ENCODE measurements at regions of chr12 and their contacts with region 1.

Region 1: DNA sequence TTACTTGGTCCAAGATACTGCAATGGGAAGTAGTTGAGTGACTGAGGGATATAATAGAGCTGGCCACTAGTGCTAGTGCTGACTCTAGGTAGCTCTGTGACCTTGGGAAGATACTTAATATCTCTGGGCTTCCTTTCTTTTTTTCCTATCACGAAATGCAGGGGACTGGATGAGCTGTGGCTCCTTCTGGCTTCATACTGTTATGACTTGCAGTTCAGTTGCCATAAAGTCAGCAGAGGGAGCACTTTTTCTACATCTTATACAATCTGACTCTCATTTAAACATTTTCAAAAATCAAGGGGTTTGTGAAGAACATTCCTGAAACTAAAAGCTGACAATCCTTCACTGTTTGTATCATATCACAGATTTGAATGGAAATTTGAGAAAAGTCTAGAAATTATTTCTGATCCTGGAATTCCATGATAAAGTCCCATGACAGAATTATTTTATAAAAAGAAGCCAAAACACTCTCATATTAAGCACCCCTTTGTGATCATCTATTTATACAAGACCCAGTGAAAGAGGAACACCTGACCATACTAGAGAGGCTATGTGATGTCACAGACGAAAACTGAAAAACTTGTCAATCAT is 5.4 kb downstream of the BHLHE41 start:
- DNase-seq: peak; percentile 50 to 79
- ATAC-seq: peak; percentile 11 to 55; a peak in 4 of 6 replicates
- H3K4me3 ChIP-seq: no peak overlapping the region
- H3K27ac ChIP-seq: no peak overlapping the region
- H3K4me1 ChIP-seq: peaks cover 19% of the 10 kb centered on the region
- CTCF ChIP-seq: peak; percentile 82
- EP300 ChIP-seq: no peak
- POLR2A ChIP-seq: no peak
- RAD21 ChIP-seq: peak; percentile 80 to 82

Region 2: DNA sequence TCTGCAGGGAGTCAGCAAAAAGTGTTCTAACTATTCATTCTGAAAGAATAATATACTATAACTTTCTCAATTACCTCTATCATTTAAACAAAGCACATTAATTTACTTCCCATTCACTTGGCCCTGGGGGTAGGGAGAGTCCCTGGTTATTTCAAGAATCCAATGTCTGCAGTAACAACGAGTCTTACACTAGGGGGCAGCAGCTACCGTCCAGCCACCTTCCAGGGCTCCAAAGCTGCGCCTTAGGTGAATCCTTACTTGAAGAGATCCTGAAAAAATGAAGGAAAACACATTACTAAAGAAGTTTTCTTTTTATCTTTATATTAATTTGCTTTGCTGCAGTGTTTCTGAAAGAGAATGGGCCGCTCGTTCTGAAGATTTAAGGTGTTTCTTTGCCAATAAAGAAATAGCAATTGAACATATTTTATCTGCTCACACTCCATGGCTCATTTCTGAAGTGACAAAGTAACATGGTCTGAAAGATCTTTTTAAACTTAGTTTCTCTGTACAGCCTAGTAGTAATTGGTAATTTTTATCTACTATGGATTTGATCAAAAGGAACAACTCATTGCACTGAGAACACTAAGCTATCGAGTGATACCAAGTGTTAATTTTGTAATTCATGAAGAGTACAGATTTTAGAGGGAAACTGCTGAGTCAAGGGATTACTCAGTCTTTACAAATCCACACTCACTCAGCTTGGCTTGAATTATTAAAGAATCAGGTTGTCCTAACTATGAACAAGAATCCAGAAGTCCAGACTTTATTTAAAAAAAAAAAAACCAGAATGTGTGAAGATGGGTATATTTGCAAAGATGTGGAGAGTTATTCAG is 22.2 kb before region 1 on chr12:
- CTCF ChIA-PET with region 1: interaction called, 14 read pairs
- POLR2A ChIA-PET with region 1: no interaction called
- DNase-seq: peak; percentile 80 to 86
- ATAC-seq: peak; percentile 97 to 100
- H3K4me3 ChIP-seq: no peak overlapping the region
- H3K27ac ChIP-seq: peak overlapping the region in 1 of 2 experiments; percentile 5; a peak in 1 of 6 replicates
- H3K4me1 ChIP-seq: 0 out of 3 replicates have a peak, but pooled peaks cover 5% of the 10 kb centered on the region
- CTCF ChIP-seq: peak; percentile 97
- EP300 ChIP-seq: no peak
- POLR2A ChIP-seq: no peak
- RAD21 ChIP-seq: peak; percentile 92 to 95

Region 3: GRCh38 chr12:26274441-26275312 is 155.2 kb after region 1 on chr12:
- CTCF ChIA-PET with region 1: interaction called, 110 read pairs
- POLR2A ChIA-PET with region 1: interaction called, 28 read pairs
- DNase-seq: peak; percentile 91 to 98
- ATAC-seq: peak; percentile 96 to 97
- H3K4me3 ChIP-seq: no peak overlapping the region
- H3K27ac ChIP-seq: peak overlapping the region; percentile 80 to 83
- H3K4me1 ChIP-seq: peaks cover 53% of the 10 kb centered on the region
- CTCF ChIP-seq: peak; percentile 49
- EP300 ChIP-seq: peak; percentile 82 to 92; a peak in 3 of 5 replicates
- POLR2A ChIP-seq: no peak
- RAD21 ChIP-seq: peak; percentile 68 to 81

Region 4: DNA sequence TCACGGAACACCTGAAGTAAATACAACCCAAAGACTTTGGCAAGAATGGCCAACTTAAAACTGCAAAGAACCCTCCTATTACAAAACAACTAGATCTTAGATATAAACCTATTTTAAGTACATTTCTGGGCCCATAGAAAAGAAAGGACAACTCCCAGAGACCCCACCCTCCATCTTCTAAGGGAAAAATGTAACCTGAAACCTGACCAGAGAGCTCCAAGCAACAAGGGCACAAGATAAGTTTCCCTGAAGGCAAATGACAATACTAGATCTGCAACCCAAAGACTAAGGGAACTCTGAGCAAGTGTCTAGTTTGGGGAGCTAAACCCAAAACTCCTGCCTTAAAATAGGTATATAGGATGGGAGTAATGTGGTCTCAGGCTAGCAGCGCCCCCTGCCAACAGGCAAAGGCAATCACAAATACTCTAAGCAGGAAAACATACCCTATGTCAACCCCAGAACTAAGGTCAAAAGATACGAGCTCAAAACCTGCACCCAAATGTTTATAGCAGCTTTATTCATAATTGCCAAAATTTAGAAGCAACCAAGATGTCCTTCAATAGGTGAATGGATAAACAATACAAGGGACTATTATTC is 494.6 kb after region 1 on chr12:
- CTCF ChIA-PET with region 1: interaction called, 13 read pairs
- POLR2A ChIA-PET with region 1: no interaction called
- DNase-seq: peak in 1 of 2 experiments; percentile 49
- ATAC-seq: peak in 1 of 2 experiments; percentile 82; a peak in 3 of 6 replicates
- H3K4me3 ChIP-seq: no peak overlapping the region
- H3K27ac ChIP-seq: no peak overlapping the region
- H3K4me1 ChIP-seq: no peaks in the 10 kb centered on the region
- CTCF ChIP-seq: peak; percentile 53; the same call in 2 of the 3 replicates
- EP300 ChIP-seq: no peak
- POLR2A ChIP-seq: no peak
- RAD21 ChIP-seq: peak; percentile 56 to 77

Region 5: DNA sequence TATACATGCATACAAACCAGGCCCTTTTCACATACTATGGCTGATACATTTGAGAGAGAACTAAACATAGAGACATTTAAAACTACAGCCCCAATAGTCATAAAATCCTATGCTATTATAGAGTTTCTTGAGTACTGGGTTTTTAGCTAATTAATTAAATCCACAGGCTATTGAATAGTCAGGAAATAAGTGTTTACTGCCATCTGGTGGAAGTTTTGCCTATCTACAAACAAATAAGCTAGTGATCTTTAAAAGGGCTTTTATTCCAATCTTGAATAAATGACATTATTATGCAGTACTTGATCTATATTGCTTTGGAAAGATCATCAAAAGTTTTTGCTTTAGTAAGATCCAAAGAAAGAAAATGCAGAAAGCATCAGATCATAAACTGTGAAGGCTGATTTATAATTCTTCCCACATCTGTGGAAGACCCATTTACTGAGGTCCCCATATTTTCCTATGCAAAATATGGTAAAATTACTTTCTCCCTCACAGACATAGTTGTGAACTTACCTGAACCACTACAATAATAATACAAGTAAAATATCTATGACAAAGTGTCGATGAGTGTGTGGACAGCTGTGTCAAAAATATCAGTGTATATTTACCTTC is 582.2 kb after region 1 on chr12:
- CTCF ChIA-PET with region 1: interaction called, 15 read pairs
- POLR2A ChIA-PET with region 1: interaction called, 3 read pairs
- DNase-seq: peak; percentile 16 to 58
- ATAC-seq: peak; percentile 39 to 72; a peak in 3 of 6 replicates
- H3K4me3 ChIP-seq: no peak overlapping the region
- H3K27ac ChIP-seq: no peak overlapping the region
- H3K4me1 ChIP-seq: peaks cover 24% of the 10 kb centered on the region
- CTCF ChIP-seq: peak; percentile 86
- EP300 ChIP-seq: no peak
- POLR2A ChIP-seq: no peak
- RAD21 ChIP-seq: peak; percentile 79 to 88

Measured in A549 (cell line).